ENCODE measurements at regions of chr9 and their contacts with region 1.

Region 1: GRCh38 chr9:111525056-111525977 is at the start of gene ZNF483:
- DNase-seq: peak; percentile 76
- ATAC-seq: peak; percentile 84
- H3K4me3 Mint-ChIP-seq: peak within 1 kb of the TSS; percentile 88
- H3K27ac Mint-ChIP-seq: peak within 1 kb of the TSS; percentile 85
- H3K4me1 Mint-ChIP-seq: peaks cover 14% of the 10 kb centered on the region
- H3K27me3 Mint-ChIP-seq: peaks cover 2% of the 10 kb centered on the region
- CTCF ChIP-seq: no peak
- total RNA-seq, gene ZNF483: 2.6 to 2.8 TPM

Region 2: GRCh38 chr9:111271481-111272080 is 253.7 kb before region 1 on chr9:
- CTCF ChIA-PET with region 1: no interaction called
- POLR2A ChIA-PET with region 1: no interaction called
- intact Hi-C with region 1: no loop called
- DNase-seq: no peak
- ATAC-seq: no peak
- H3K4me3 Mint-ChIP-seq: no peak overlapping the region
- H3K27ac Mint-ChIP-seq: no peak overlapping the region
- H3K4me1 Mint-ChIP-seq: no peaks in the 10 kb centered on the region
- H3K27me3 Mint-ChIP-seq: peaks cover 5% of the 10 kb centered on the region
- CTCF ChIP-seq: no peak

Region 3: GRCh38 chr9:111501648-111502047 is 23.7 kb before region 1 on chr9:
- CTCF ChIA-PET with region 1: interaction called, 3 read pairs
- POLR2A ChIA-PET with region 1: interaction called, 4 read pairs
- intact Hi-C with region 1: loop called (anchors 2 kb)
- DNase-seq: no peak
- ATAC-seq: no peak
- H3K4me3 Mint-ChIP-seq: no peak overlapping the region
- H3K27ac Mint-ChIP-seq: no peak overlapping the region
- H3K4me1 Mint-ChIP-seq: no peaks in the 10 kb centered on the region
- H3K27me3 Mint-ChIP-seq: peaks cover 8% of the 10 kb centered on the region
- CTCF ChIP-seq: no peak

Region 4: DNA sequence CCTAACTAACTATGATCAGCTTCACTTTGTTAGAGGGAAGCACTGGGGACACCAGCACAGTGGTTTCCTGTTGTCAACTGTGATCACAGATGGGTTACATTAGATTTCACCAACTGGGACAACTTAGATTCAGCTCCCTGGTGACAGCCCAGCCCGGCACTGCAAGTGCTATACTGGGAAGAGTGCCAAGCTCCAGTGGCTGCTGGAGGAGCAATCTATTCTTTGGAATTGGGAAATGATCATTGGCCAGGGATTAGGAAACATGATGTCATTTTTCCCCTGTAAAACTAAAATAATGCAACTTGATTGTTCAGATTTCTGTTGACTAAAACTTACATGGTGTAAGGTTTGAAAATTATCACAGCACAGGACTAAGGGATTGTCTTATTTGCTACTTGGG is 40.9 kb after region 1 on chr9:
- CTCF ChIA-PET with region 1: no interaction called
- POLR2A ChIA-PET with region 1: no interaction called
- intact Hi-C with region 1: no loop called
- DNase-seq: no peak
- ATAC-seq: no peak
- H3K4me3 Mint-ChIP-seq: no peak overlapping the region
- H3K27ac Mint-ChIP-seq: no peak overlapping the region
- H3K4me1 Mint-ChIP-seq: no peaks in the 10 kb centered on the region
- H3K27me3 Mint-ChIP-seq: no peaks in the 10 kb centered on the region
- CTCF ChIP-seq: no peak

Measured in activated CD8-positive, alpha-beta T cell treated with anti-CD3 and anti-CD28 coated beads for 36 hours (primary cell).